Kidney (tissue), 22 donors: ENCODE measurements at regions of chr9 and their contacts with region 1.

Region 1: GRCh38 chr9:20356403-20357035 is 265.8 kb downstream of the MLLT3 start:
- DNase-seq: peak; percentile 66 to 94 (median 82)
- H3K4me3 ChIP-seq: peak overlapping the region in 2 of 3 donors; percentile 37 to 41
- H3K27ac ChIP-seq: no peak overlapping the region
- H3K4me1 ChIP-seq: peaks cover 6 to 12% (median 8%) of the 10 kb centered on the region in 3 donors
- H3K27me3 ChIP-seq: no peaks in the 10 kb centered on the region
- CTCF ChIP-seq: peak; percentile 71

Region 2: DNA sequence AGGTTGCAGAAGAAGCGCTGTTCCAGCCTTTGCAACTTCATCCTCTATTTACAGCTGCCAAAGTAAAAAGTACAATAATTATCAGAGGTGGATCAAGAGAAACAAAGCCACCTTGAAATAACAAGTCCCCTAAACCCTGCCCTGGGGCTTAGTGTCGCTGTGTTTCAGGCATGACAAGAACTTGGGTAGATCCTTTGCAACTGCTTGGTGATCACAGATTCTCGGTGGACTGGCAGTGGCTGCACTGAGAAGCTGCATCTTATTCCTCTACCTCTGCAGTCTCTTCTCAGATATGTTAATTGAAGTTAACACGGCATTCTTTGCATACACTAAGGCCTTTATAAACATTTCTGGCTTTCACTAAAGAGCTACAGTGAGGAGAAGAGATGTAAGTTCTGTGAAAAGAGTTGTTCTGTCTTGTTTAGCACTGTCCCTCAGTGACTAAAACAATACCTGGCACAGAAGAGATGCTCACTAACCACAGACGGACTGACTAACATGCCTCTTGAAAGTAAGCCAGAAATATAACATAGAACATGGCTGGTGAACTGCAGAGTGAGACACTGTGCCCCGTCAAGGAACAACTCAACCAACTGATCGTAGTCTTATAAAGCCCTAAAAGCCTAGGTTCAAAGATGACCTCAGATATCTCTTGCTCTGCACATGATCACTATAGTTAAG is 121.6 kb after region 1 on chr9:
- intact Hi-C with region 1: no loop called
- DNase-seq: no peak
- H3K4me3 ChIP-seq: no peak overlapping the region
- H3K27ac ChIP-seq: no peak overlapping the region
- H3K4me1 ChIP-seq: no peaks in the 10 kb centered on the region
- H3K27me3 ChIP-seq: no peaks in the 10 kb centered on the region
- CTCF ChIP-seq: no peak

Region 3: DNA sequence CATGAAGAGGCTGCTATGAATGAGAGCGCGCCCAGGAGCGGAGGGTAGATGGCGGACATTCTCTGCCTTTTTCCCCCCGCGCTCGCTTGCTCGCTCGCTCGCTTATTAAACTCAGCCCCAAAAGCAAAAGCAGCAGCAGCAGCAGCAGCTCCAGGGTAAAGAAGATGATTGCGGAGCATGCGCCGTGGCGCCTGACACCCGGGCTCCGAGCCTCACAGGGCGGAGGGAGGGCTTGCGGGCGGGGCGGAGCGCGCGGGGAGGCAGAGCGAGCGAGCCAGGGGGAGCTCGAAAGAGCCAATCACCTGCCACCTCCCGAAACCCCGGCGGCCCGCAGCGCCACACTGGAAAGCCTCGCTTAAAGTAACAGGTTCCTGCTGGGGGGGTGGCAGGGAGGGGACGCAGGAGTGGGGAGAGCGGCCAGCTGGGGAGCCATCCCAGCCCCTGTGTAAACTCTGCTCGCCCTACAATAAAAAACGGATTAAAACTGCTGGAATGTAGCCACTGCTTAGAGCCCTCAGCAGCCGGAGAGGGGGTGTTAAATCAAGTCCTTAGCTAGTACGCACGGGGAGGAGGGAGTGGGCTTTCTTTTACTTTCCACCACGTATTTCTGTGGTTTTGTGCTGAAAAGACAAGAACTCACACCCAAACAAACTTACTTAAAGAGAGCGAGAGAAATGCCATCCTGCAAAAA is 266.0 kb after region 1 on chr9 and contains the start of gene MLLT3:
- intact Hi-C with region 1: loop called (anchors 10 kb)
- DNase-seq: peak; percentile 95 to 99 (median 96)
- H3K4me3 ChIP-seq: peak within 1 kb of the TSS; percentile 81 to 94 (median 84)
- H3K27ac ChIP-seq: peak within 1 kb of the TSS; percentile 87 to 89
- H3K4me1 ChIP-seq: peaks cover 0 to 6% (median 4%) of the 10 kb centered on the region in 3 donors
- H3K27me3 ChIP-seq: peaks cover 11% of the 10 kb centered on the region
- CTCF ChIP-seq: no peak
- total RNA-seq, gene MLLT3: 19.7 TPM

Region 4: DNA sequence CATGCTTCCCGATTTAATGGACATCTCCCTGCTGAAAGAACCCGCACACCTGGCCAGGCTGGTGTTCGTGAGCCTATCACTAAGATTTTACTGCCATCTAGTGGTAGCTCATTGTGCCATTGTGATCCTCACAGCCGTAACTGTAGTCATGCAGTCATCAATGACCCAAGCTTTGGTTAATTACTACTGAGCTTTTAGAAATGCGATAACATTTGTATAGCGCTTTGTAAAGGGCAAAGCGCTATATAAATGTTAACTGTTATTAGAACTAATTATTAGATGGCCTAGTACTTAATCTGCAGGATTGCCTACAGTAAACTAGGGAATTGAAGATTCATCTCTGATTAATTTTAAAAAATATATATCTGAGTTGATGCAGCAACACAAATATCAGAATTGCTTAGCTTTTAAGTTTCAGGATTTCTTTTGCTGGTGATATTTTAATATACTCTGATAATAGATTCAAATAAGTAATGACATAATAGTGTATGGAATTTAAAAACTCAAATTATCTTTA is 584.7 kb after region 1 on chr9:
- intact Hi-C with region 1: loop called (anchors 10 kb)
- DNase-seq: peak in 4 of 5 donors; percentile 50 to 86 (median 71)
- H3K4me3 ChIP-seq: no peak overlapping the region
- H3K27ac ChIP-seq: no peak overlapping the region
- H3K4me1 ChIP-seq: no peaks in the 10 kb centered on the region
- H3K27me3 ChIP-seq: no peaks in the 10 kb centered on the region
- CTCF ChIP-seq: peak; percentile 77